Right cardiac atrium (tissue), 5 donors: ENCODE measurements at regions of chr19 and their contacts with region 1.

Region 1: GRCh38 chr19:11035441-11036377 is 53.6 kb upstream of the LDLR start:
- DNase-seq: peak; percentile 95 to 98 (median 96)
- ATAC-seq: peak; percentile 92 to 95
- H3K4me3 ChIP-seq: no peak overlapping the region
- H3K27ac ChIP-seq: no peak overlapping the region
- H3K4me1 ChIP-seq: no peaks in the 10 kb centered on the region
- H3K27me3 ChIP-seq: no peaks in the 10 kb centered on the region

Region 2: GRCh38 chr19:11106477-11106876 is 70.8 kb after region 1 on chr19:
- intact Hi-C with region 1: loop called in 2 of 4 experiments (anchors 10 kb)
- DNase-seq: peak; percentile 61 to 84 (median 80)
- ATAC-seq: peak; percentile 9 to 20
- H3K4me3 ChIP-seq: no peak overlapping the region
- H3K27ac ChIP-seq: no peak overlapping the region
- H3K4me1 ChIP-seq: no peaks in the 10 kb centered on the region
- H3K27me3 ChIP-seq: no peaks in the 10 kb centered on the region

Region 3: GRCh38 chr19:11125994-11126685 is 90.4 kb after region 1 on chr19:
- intact Hi-C with region 1: loop called in 2 of 4 experiments (anchors 2 to 5 kb)
- DNase-seq: peak; percentile 80 to 91 (median 89)
- ATAC-seq: peak; percentile 60 to 65
- H3K4me3 ChIP-seq: no peak overlapping the region
- H3K27ac ChIP-seq: peak overlapping the region; percentile 43
- H3K4me1 ChIP-seq: no peaks in the 10 kb centered on the region
- H3K27me3 ChIP-seq: no peaks in the 10 kb centered on the region